Activated T-helper 1 cell treated with anti-CD3 and anti-CD28 coated beads, Interleukin-12 subunit alpha, Interleukin-12 subunit beta, Interleukin-2, Interleukin-4 antibody, amounts not matched to agents 30 ng/mL and 10 ng/mL and 1 ng/mL, durations not matched to agents 14 hours and 24 hours and 36 hours (primary cell): ENCODE measurements at regions of chr1 and their contacts with region 1.

Region 1: GRCh38 chr1:245045087-245045881 is 109.5 kb upstream of the KIF26B start:
- DNase-seq: no peak
- H3K4me3 Mint-ChIP-seq: no peak overlapping the region
- H3K27ac Mint-ChIP-seq: no peak overlapping the region
- H3K4me1 Mint-ChIP-seq: peaks cover 6% of the 10 kb centered on the region
- H3K27me3 Mint-ChIP-seq: no peaks in the 10 kb centered on the region

Region 2: GRCh38 chr1:244801246-244801645 is 244.0 kb before region 1 on chr1:
- intact Hi-C with region 1: loop called (anchors 1 kb)
- DNase-seq: peak; percentile 6
- H3K4me3 Mint-ChIP-seq: no peak overlapping the region
- H3K27ac Mint-ChIP-seq: no peak overlapping the region
- H3K4me1 Mint-ChIP-seq: peaks cover 8% of the 10 kb centered on the region
- H3K27me3 Mint-ChIP-seq: peaks cover 14% of the 10 kb centered on the region

Region 3: DNA sequence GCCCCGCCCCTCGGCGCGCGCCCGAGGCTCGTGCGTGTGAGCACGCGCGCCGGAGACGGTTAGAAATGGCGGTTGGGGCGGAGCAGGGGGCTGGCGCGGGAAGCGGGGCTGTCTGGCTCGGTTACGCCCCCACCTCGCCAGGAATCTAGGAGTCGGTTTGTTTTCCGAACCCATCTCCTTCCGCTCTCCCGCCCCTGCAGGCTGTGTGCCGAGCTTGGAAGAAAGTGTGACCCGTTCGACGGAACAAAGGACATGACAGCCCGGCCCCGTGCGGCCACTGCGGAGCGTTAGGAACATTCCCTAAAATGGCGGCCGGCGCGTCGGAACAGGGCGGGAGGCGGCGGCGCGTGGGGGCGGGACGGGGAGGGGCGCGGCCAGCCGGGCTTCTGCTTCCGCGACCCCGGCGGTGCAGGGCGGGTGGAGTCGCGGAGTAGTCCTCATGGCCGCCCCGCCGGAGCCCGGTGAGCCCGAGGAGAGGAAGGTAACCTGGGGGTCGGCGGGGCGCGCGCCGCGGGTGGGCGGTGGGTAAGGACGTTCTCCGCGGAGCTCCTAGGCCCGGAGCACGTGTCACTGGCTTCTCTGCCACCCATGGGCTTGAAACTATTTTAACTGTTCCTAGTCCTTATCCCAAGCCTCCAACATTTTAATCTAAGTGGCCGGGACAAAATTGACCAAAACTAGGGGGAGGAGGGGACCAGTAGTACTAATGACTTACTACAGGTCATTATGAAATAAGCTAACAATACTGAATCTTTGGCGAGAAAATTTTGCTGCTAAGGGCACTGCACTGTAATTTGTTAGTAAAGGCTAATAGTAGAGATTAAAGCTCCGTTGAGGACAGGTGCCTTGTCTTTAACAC is 209.8 kb before region 1 on chr1 and contains the start of gene COX20:
- intact Hi-C with region 1: loop called (anchors 1 kb)
- DNase-seq: peak; percentile 85
- H3K4me3 Mint-ChIP-seq: peak within 1 kb of the TSS; percentile 96
- H3K27ac Mint-ChIP-seq: peak within 1 kb of the TSS; percentile 99
- H3K4me1 Mint-ChIP-seq: peaks cover 56% of the 10 kb centered on the region
- H3K27me3 Mint-ChIP-seq: no peaks in the 10 kb centered on the region
- total RNA-seq, gene COX20: 27.4 and 27.6 TPM in 2 replicates

Region 4: DNA sequence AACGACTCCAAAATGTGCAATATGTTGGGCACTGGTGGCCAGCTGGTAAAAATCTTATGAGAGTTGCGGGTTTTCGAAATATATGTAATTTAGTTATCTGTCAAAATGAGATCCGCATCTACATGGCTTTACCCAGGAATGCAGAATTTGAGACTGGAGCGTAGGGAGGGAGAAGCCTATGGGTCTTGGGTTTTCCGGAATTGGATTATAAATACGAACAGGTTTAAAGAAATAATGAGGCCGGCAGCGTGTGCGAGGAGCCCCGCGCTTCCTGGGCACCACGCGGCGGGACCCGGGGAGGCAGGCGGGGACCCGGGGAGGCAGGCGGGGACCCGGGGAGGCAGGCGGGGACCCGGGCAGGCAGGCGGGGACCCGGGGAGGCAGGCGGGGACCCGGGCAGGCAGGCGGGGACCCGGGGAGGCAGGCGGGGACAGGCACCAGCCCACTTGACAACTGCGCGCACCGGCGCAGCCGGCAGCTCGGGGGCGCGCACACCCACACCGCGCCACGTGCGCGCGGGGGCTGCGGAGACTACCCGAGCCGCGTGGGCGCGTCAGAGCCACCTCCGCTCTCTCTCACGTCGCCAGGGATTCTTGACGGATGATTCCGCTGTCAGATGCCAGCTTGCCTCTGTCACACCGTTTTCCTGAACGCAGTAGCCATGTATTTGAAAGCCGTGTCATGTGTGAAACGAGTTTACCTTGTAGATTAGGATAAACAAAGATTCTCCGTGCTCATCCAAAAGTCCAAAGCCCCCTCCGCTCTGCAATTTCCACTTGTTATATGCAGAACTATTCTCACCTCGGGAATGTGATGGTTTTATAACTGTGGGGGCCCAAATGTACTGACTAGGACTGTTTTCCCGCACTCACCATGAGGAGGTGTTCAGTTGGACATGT is 126.6 kb before region 1 on chr1:
- intact Hi-C with region 1: loop called (anchors 5 kb)
- DNase-seq: peak; percentile 39
- H3K4me3 Mint-ChIP-seq: peak overlapping the region; percentile 82
- H3K27ac Mint-ChIP-seq: peak overlapping the region; percentile 55
- H3K4me1 Mint-ChIP-seq: peaks cover 14% of the 10 kb centered on the region
- H3K27me3 Mint-ChIP-seq: peaks cover 30% of the 10 kb centered on the region

Region 5: DNA sequence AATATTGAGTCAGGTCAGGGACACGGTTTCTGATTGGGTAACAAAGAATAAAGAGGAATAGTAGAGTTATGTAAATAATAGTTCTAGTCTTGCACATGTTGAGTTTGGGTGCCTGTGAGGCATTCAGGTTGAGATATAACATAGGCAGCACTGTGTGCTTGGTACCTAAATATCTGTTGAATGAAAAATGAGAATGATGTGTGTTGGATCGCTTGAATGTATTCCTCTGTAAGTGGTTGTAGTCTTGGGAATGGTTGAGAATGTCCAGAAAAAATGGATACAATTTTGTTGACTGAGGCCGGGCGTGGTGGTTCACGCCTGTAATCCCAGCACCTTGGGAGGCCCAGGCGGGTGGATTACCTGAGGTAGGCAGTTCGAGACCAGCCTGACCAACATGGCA is 64.7 kb before region 1 on chr1:
- intact Hi-C with region 1: no loop called
- DNase-seq: no peak
- H3K4me3 Mint-ChIP-seq: no peak overlapping the region
- H3K27ac Mint-ChIP-seq: no peak overlapping the region
- H3K4me1 Mint-ChIP-seq: no peaks in the 10 kb centered on the region
- H3K27me3 Mint-ChIP-seq: peaks cover 2% of the 10 kb centered on the region